Activated CD4-positive, alpha-beta T cell treated with anti-CD3 and anti-CD28 coated beads, Interleukin-2, amount 10 ng/mL, durations not matched to agents 24 days and 14 days (primary cell): ENCODE measurements at regions of chr2 and their contacts with region 1.

Region 1: DNA sequence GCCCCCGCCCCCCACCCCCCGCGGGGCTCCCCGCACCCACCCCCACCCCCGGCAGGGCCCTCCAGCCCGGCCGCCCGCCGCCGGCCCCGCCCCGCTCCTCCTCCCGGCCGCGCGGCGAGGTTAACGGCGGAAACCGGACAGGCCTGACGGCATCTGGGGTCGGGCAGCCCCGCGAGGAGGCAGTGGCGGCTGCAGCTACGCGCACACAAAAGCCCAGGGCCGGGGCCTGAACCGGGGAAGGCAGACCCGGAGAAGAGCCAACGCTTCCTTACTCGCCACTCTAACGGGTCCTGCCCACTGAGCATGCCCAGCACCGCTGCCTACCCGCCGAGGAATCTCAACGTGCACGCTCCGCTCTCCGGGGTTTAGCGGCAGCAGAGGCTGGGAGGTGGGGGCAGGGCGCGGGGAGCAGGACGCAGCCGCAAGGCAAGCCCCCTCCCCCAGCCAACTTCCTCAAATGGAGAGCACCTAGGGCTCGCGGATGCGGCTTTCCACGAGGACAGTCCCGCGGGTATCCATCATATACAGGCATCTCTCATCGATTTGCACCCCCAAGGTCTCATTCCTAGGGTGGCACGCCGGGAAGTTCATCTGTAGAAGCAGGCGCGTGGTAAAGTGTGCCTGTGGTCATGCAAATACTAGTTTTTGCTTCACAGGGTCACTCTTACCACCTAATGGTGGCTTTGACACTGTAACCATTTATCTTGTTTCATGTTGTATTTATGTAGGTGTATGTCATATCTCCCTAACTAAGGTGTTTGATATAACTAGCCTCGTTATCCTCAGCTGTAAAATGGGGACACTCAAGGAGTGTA is at the start of gene MEMO1:
- DNase-seq: peak; percentile 98
- H3K4me3 Mint-ChIP-seq: peak within 1 kb of the TSS; percentile 90
- H3K27ac Mint-ChIP-seq: peak within 1 kb of the TSS; percentile 96
- H3K4me1 Mint-ChIP-seq: peaks cover 33% of the 10 kb centered on the region
- H3K27me3 Mint-ChIP-seq: no peaks in the 10 kb centered on the region
- total RNA-seq, gene MEMO1: 64.0 and 65.8 TPM in 2 replicates

Region 2: DNA sequence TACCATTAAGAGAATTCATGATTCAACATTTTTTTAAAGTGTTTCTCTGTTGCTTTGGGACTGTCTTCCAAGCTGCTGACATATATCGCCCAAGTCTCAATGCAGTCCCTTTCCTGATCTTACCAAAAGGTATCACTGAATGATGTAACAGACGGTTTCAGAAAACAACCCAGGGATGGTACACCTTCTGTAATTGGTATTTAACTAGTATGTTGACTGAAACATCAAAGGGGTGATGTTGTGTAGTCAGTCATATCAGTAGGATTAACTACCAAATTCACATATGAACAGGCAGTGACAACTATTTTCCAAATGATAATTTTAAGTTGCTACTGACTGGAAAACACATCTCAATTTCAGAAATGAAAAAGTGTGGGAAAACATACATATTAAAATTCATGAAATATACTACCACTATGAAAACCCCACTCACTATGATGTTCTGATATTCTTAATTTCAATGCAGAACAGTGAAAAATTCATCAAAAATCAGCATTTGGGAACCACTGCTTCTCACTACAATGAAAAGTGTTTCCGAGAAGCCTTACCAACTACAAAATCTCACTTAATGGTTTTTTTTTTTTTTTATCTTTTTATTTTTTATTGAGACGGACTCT is 59.8 kb before region 1 on chr2:
- intact Hi-C with region 1: loop called (anchors 2 kb)
- DNase-seq: no peak
- H3K4me3 Mint-ChIP-seq: no peak overlapping the region
- H3K27ac Mint-ChIP-seq: peak overlapping the region; percentile 52
- H3K4me1 Mint-ChIP-seq: peaks cover 17% of the 10 kb centered on the region
- H3K27me3 Mint-ChIP-seq: no peaks in the 10 kb centered on the region

Region 3: GRCh38 chr2:32039447-32040219 is 28.8 kb after region 1 on chr2 and contains the start of gene DPY30:
- intact Hi-C with region 1: loop called (anchors 1 kb)
- DNase-seq: peak; percentile 97
- H3K4me3 Mint-ChIP-seq: peak within 1 kb of the TSS; percentile 97
- H3K27ac Mint-ChIP-seq: peak within 1 kb of the TSS; percentile 92
- H3K4me1 Mint-ChIP-seq: peaks cover 14% of the 10 kb centered on the region
- H3K27me3 Mint-ChIP-seq: no peaks in the 10 kb centered on the region
- total RNA-seq, gene DPY30: 71.8 and 74.4 TPM in 2 replicates

Region 4: GRCh38 chr2:32168513-32168912 is 157.6 kb after region 1 on chr2:
- intact Hi-C with region 1: loop called (anchors 1 kb)
- DNase-seq: no peak
- H3K4me3 Mint-ChIP-seq: no peak overlapping the region
- H3K27ac Mint-ChIP-seq: no peak overlapping the region
- H3K4me1 Mint-ChIP-seq: peaks cover 33% of the 10 kb centered on the region
- H3K27me3 Mint-ChIP-seq: no peaks in the 10 kb centered on the region

Region 5: GRCh38 chr2:33599175-33599942 is 1588.5 kb after region 1 on chr2 and contains the start of gene FAM98A:
- intact Hi-C with region 1: loop called (anchors 2 kb)
- DNase-seq: peak; percentile 100
- H3K4me3 Mint-ChIP-seq: peak within 1 kb of the TSS; percentile 98
- H3K27ac Mint-ChIP-seq: peak within 1 kb of the TSS; percentile 99
- H3K4me1 Mint-ChIP-seq: peaks cover 30% of the 10 kb centered on the region
- H3K27me3 Mint-ChIP-seq: peaks cover 2% of the 10 kb centered on the region
- total RNA-seq, gene FAM98A: 72.9 and 79.2 TPM in 2 replicates